Heart right ventricle (tissue), 16 donors: ENCODE measurements at regions of chr14 and their contacts with region 1.

Region 1: DNA sequence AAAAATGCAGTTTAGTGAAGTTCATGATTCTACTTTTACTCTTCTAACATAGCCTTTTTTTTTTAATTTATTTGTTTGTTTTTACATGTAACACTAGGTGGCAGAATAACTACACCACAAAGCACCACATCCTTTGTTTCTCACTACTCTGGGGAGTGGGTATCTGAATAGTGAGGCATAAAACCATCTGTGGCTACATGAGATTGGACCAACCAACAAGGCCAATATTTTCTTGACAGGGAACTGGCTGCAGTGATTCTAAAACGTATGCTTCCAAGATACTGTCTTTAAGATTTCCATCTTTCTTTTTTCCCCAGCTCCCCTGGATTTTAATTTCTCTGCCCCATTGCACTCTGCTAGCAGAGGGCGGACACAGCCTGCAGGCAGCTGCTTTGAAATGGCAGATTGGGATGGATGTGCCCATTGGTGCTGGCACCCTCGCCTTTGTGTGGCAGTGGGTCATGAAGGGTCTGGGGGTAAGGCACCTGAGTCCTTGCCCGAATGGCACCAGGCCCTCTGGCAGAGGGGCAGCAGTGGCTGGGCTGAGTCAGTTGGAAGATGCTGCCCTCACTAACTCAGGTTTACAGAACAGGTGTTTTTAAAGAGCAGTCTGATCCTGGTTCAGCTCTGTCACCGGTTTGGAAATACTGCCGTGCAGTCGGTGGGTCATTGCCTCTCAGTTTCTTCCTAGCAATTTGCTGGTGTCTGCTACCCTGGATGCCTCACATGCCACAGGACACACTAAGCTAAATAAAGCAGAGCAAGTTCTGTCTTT is 429.1 kb downstream of the RAD51B start:
- DNase-seq: peak; percentile 23 to 31
- ATAC-seq: peak; percentile 51 to 79 (median 73)
- H3K4me3 ChIP-seq: no peak overlapping the region
- H3K27ac ChIP-seq: peak overlapping the region in 9 of 10 donors; percentile 77 to 94 (median 85)
- H3K4me1 ChIP-seq: peaks cover 27 to 85% (median 81%) of the 10 kb centered on the region in 9 donors
- H3K27me3 ChIP-seq: no peaks in the 10 kb centered on the region
- CTCF ChIP-seq: peak; percentile 61 to 76 (median 63)

Region 2: GRCh38 chr14:67934008-67934481 is 314.6 kb before region 1 on chr14:
- intact Hi-C with region 1: loop called in 1 of 10 experiments (anchors 2 kb)
- DNase-seq: peak in 1 of 2 donors; percentile 26
- ATAC-seq: peak in 7 of 8 donors; percentile 87 to 94 (median 92)
- H3K4me3 ChIP-seq: no peak overlapping the region
- H3K27ac ChIP-seq: peak overlapping the region in 8 of 10 donors; percentile 9 to 62 (median 38)
- H3K4me1 ChIP-seq: peaks cover 3 to 24% (median 11%) of the 10 kb centered on the region in 9 donors
- H3K27me3 ChIP-seq: no peaks in the 10 kb centered on the region
- CTCF ChIP-seq: peak; percentile 40 to 79 (median 66)

Region 3: GRCh38 chr14:68111097-68111852 is 137.4 kb before region 1 on chr14:
- intact Hi-C with region 1: no loop called
- DNase-seq: no peak
- ATAC-seq: peak in 1 of 8 donors; percentile 16
- H3K4me3 ChIP-seq: no peak overlapping the region
- H3K27ac ChIP-seq: no peak overlapping the region
- H3K4me1 ChIP-seq: peaks cover 0 to 25% (median 10%) of the 10 kb centered on the region in 9 donors
- H3K27me3 ChIP-seq: peaks cover 0 to 6% (median 0%) of the 10 kb centered on the region in 7 donors
- CTCF ChIP-seq: no peak

Region 4: DNA sequence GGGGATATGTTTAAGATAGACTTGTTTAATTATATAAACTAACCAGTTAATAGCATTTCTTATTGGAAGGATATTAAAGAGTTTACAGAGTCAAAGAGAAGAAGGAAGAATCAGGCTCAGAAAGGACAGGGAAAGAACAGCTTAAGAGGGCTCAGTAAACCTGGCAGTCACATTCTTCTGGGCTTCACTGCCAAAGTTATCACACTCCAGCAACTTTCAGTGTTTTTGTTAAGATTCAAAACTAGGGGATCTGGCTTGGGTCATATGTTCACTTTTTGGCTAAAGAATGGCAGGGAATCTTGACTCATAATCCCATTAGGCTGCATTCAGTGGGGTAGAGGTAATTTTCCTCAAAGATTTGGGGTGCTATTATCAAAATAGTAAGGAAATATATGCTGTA is 116.8 kb before region 1 on chr14:
- intact Hi-C with region 1: no loop called
- DNase-seq: no peak
- ATAC-seq: peak in 2 of 8 donors; percentile 8 to 34
- H3K4me3 ChIP-seq: no peak overlapping the region
- H3K27ac ChIP-seq: no peak overlapping the region
- H3K4me1 ChIP-seq: peaks cover 0 to 4% (median 0%) of the 10 kb centered on the region in 9 donors
- H3K27me3 ChIP-seq: no peaks in the 10 kb centered on the region
- CTCF ChIP-seq: no peak

Region 5: GRCh38 chr14:68146807-68147206 is 101.9 kb before region 1 on chr14:
- intact Hi-C with region 1: loop called in 4 of 10 experiments (anchors 2 to 5 kb)
- DNase-seq: no peak
- ATAC-seq: no peak
- H3K4me3 ChIP-seq: no peak overlapping the region
- H3K27ac ChIP-seq: peak overlapping the region in 5 of 10 donors; percentile 3 to 86 (median 71)
- H3K4me1 ChIP-seq: peaks cover 7 to 35% (median 24%) of the 10 kb centered on the region in 9 donors
- H3K27me3 ChIP-seq: no peaks in the 10 kb centered on the region
- CTCF ChIP-seq: no peak

Region 6: DNA sequence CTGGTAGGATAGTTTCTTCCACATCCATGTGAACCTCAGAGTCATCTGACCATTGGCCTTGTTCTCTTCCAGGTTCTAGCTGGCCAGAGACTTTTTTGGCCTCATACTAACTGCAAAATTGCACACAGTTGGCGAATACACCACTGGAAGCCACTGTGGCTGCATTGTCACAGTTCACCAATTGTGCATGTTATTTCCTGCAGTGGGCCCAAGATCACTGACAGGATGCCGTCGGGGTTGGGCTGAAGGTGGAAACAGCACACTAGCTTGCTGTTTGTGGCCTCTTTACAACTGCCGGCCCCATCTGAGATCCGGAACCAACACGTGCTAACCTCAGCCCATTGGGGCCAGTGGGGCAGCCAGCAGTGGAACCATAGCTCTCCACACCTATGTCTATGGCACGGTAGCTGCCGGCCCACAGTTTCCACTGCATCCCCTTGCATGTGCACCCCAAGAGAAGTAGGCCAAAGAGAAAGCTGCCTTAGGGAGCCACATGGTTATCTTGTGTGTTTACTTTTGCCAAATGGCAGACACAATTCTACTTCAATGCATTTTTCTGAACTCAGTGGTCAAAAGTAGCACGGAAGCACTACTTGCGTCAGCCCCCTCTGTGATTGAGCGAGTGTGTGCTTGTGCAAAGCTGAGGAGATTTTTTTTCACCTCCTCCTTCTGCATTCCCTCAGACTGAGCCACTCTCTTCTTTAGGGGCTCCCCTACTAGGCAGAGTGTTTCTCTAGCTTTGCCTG is 34.9 kb after region 1 on chr14:
- intact Hi-C with region 1: no loop called
- DNase-seq: peak in 1 of 2 donors; percentile 32
- ATAC-seq: peak; percentile 45 to 69 (median 58)
- H3K4me3 ChIP-seq: no peak overlapping the region
- H3K27ac ChIP-seq: peak overlapping the region in 8 of 10 donors; percentile 30 to 75 (median 48)
- H3K4me1 ChIP-seq: peaks cover 3 to 54% (median 18%) of the 10 kb centered on the region in 9 donors
- H3K27me3 ChIP-seq: no peaks in the 10 kb centered on the region
- CTCF ChIP-seq: no peak

Region 7: DNA sequence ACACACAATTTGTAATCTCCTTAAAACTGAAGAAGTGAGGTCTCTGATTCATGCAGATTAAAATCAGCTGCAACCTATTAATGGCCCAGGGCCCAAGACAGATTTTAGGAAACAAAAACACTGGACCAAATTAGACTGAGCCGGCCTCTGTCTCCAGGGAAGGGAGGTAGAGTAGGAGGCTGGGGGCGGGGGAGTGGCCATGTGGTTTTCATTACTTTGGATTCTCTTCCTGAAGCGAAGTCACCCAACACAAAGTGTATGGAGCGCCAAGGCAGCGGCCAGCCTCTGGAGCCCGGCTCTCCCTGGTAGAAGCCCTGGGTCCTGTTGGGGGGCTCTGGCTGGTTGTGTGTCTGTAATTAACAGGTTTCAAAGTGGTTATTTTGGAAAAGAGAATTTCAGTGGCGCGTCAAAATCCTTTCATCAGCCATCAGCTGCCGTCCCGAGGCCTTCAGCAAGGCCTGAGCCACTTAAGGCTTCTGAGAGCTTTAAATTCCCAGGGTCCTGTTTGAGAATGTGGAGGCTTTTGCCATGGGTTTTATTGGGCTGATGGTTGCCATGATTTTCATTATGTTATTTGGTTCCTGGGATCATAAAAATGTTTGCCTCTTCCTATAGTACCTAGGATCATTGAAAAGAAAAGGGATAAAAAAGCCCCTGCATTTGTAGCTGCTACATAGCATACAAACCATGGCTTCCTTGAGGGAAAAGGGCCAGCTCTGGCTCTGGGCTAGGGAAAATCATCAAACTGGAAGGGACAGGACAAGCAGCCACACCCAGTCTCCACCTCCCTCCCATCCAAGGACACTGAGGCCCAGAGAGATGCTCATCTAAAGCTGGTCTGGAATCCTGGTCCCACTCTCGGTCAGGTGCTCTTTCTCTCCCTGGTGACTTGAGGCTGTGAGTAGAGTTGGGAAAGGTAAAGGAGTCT is 261.8 kb after region 1 on chr14:
- intact Hi-C with region 1: loop called in 2 of 10 experiments (anchors 5 to 10 kb)
- DNase-seq: peak; percentile 56 to 65
- ATAC-seq: peak in 7 of 8 donors; percentile 31 to 70 (median 59)
- H3K4me3 ChIP-seq: no peak overlapping the region
- H3K27ac ChIP-seq: peak overlapping the region in 9 of 10 donors; percentile 3 to 74 (median 53)
- H3K4me1 ChIP-seq: peaks cover 12 to 74% (median 61%) of the 10 kb centered on the region in 9 donors
- H3K27me3 ChIP-seq: no peaks in the 10 kb centered on the region
- CTCF ChIP-seq: no peak

Region 8: DNA sequence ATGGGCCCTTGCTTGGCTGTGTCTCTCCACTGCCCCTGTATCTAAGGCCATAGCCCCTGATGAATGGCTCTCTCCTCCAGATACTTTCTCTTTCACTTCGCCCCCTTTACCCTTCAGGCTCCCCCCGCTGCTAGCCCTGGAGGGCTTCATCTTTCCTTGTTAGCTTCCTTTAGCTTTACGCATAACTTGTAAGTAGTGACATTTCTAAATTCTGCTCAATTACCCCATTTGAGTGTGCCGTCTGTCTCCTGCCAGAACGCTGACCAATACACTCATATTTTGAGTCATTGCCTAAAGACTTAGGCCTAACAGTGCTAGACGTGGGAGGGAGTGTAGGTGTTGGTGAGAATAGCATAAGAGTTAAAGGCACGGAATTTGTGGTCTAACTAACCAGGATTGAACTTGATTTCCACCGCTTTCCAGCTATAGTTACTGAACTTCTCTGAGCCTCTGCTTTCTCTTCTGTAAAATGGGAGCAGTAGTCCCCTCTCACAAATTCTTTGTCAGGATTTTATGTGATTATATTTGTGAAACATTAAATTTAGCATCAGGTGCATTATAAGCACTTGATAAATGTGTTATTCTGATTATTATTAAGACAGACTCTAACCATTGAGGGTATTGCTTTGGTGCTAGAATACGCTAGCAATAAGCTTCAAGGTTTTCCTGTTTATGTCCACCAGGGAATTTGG is 414.9 kb after region 1 on chr14:
- intact Hi-C with region 1: loop called in 2 of 10 experiments (anchors 5 to 10 kb)
- DNase-seq: no peak
- ATAC-seq: no peak
- H3K4me3 ChIP-seq: peak overlapping the region in 1 of 10 donors; percentile 18
- H3K27ac ChIP-seq: peak overlapping the region in 3 of 10 donors; percentile 46 to 74 (median 70)
- H3K4me1 ChIP-seq: peaks cover 16 to 75% (median 49%) of the 10 kb centered on the region in 9 donors
- H3K27me3 ChIP-seq: no peaks in the 10 kb centered on the region
- CTCF ChIP-seq: no peak

Region 9: GRCh38 chr14:68788996-68789820 is 540.5 kb after region 1 on chr14:
- intact Hi-C with region 1: loop called in 9 of 10 experiments (anchors 2 to 5 kb)
- DNase-seq: peak; percentile 85 to 88
- ATAC-seq: peak in 7 of 8 donors; percentile 13 to 50 (median 28)
- H3K4me3 ChIP-seq: peak overlapping the region; percentile 60 to 93 (median 88)
- H3K27ac ChIP-seq: peak overlapping the region; percentile 99 to 100 (median 100)
- H3K4me1 ChIP-seq: peaks cover 0 to 58% (median 32%) of the 10 kb centered on the region in 9 donors
- H3K27me3 ChIP-seq: no peaks in the 10 kb centered on the region
- CTCF ChIP-seq: peak; percentile 63 to 86 (median 72)

Region 10: GRCh38 chr14:69387311-69387710 is 1138.6 kb after region 1 on chr14:
- intact Hi-C with region 1: loop called in 1 of 10 experiments (anchors 10 kb)
- DNase-seq: no peak
- ATAC-seq: no peak
- H3K4me3 ChIP-seq: no peak overlapping the region
- H3K27ac ChIP-seq: no peak overlapping the region
- H3K4me1 ChIP-seq: peaks cover 0 to 21% (median 11%) of the 10 kb centered on the region in 9 donors
- H3K27me3 ChIP-seq: no peaks in the 10 kb centered on the region
- CTCF ChIP-seq: no peak